ENCODE measurements at regions of chr7 and their contacts with region 1.

Region 1: GRCh38 chr7:149125863-149126661 is at the start of gene ZNF425:
- DNase-seq: peak; percentile 49 to 96
- H3K4me3 ChIP-seq: peak within 1 kb of the TSS; percentile 88 to 92
- H3K27ac ChIP-seq: peak within 1 kb of the TSS; percentile 82 to 96
- H3K4me1 ChIP-seq: peaks cover 6 to 8% of the 10 kb centered on the region in 2 donors
- H3K27me3 ChIP-seq: no peaks in the 10 kb centered on the region
- CTCF ChIP-seq: peak; percentile 96 to 97 (median 97)
- total RNA-seq, gene ZNF425: not detected

Region 2: DNA sequence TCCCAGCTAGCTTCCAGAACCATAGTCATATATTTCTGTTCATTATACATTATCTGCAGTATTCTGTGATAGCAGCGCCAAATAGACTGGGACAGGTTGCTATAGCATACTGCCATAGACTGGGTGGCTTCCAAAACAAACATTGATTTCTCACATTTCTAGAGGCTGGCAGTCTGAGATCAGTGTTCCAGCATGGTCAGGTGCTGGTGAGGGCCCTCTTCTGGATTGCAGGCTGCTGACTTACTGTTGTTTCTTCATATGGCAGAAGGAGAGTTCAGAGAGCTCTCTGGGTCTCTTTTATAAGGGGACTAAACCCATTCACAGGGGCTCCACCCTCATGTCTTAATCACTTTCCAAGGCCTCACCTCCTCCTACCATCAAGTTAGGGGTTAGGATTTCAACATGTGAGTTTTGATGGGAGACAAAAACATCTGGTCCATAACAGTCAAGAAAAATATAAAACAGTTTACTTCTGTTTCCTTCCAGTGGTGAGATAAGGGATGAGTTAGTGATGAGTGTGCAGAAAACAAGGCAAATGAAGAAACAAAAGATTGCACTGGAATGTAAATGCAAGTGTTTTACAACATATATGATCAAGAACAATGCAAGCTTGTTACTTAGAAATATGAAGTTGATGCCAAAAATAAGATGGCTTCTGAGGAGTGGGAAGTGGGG is 934.5 kb before region 1 on chr7:
- intact Hi-C with region 1: no loop called
- DNase-seq: no peak
- H3K4me3 ChIP-seq: no peak overlapping the region
- H3K27ac ChIP-seq: no peak overlapping the region
- H3K4me1 ChIP-seq: no peaks in the 10 kb centered on the region
- H3K27me3 ChIP-seq: no peaks in the 10 kb centered on the region
- CTCF ChIP-seq: no peak

Region 3: GRCh38 chr7:148698397-148699023 is 427.6 kb before region 1 on chr7 and contains the start of gene CUL1:
- intact Hi-C with region 1: loop called (anchors 10 kb)
- DNase-seq: peak; percentile 36 to 92
- H3K4me3 ChIP-seq: peak within 1 kb of the TSS; percentile 97 to 99
- H3K27ac ChIP-seq: peak within 1 kb of the TSS; percentile 99 to 100
- H3K4me1 ChIP-seq: peaks cover 4 to 30% of the 10 kb centered on the region in 2 donors
- H3K27me3 ChIP-seq: no peaks in the 10 kb centered on the region
- CTCF ChIP-seq: no peak
- total RNA-seq, gene CUL1: 16.3 TPM

Region 4: GRCh38 chr7:149067876-149068275 is 58.2 kb before region 1 on chr7:
- intact Hi-C with region 1: loop called (anchors 1 kb)
- DNase-seq: no peak
- H3K4me3 ChIP-seq: no peak overlapping the region
- H3K27ac ChIP-seq: no peak overlapping the region
- H3K4me1 ChIP-seq: no peaks in the 10 kb centered on the region
- H3K27me3 ChIP-seq: no peaks in the 10 kb centered on the region
- CTCF ChIP-seq: no peak

Region 5: GRCh38 chr7:149090397-149091195 is 35.5 kb before region 1 on chr7 and contains the start of gene ZNF786:
- intact Hi-C with region 1: loop called (anchors 2 kb)
- DNase-seq: peak; percentile 29 to 92
- H3K4me3 ChIP-seq: peak within 1 kb of the TSS; percentile 95 to 97
- H3K27ac ChIP-seq: peak within 1 kb of the TSS; percentile 96 to 97
- H3K4me1 ChIP-seq: peaks cover 0 to 7% of the 10 kb centered on the region in 2 donors
- H3K27me3 ChIP-seq: no peaks in the 10 kb centered on the region
- CTCF ChIP-seq: peak; percentile 91 to 97 (median 94)
- total RNA-seq, gene ZNF786: 8.4 TPM

Region 6: GRCh38 chr7:149136118-149136517 is 10.1 kb after region 1 on chr7:
- intact Hi-C with region 1: no loop called
- DNase-seq: peak in 1 of 2 donors; percentile 18
- H3K4me3 ChIP-seq: no peak overlapping the region
- H3K27ac ChIP-seq: no peak overlapping the region
- H3K4me1 ChIP-seq: no peaks in the 10 kb centered on the region
- H3K27me3 ChIP-seq: no peaks in the 10 kb centered on the region
- CTCF ChIP-seq: no peak

Region 7: GRCh38 chr7:149147072-149147751 is 21.1 kb after region 1 on chr7 and contains the start of gene ZNF398:
- intact Hi-C with region 1: loop called (anchors 1 kb)
- DNase-seq: peak in 1 of 2 donors; percentile 85
- H3K4me3 ChIP-seq: peak within 1 kb of the TSS; percentile 90 to 96
- H3K27ac ChIP-seq: peak within 1 kb of the TSS; percentile 80 to 92
- H3K4me1 ChIP-seq: peaks cover 0 to 14% of the 10 kb centered on the region in 2 donors
- H3K27me3 ChIP-seq: no peaks in the 10 kb centered on the region
- CTCF ChIP-seq: peak; percentile 48 to 77 (median 49)
- total RNA-seq, gene ZNF398: 19.6 TPM

Region 8: GRCh38 chr7:149195180-149196150 is 69.4 kb after region 1 on chr7 and contains the start of gene ZNF282:
- intact Hi-C with region 1: loop called (anchors 5 kb)
- DNase-seq: peak; percentile 56 to 96
- H3K4me3 ChIP-seq: peak within 1 kb of the TSS; percentile 79 to 98
- H3K27ac ChIP-seq: peak within 1 kb of the TSS; percentile 80 to 95
- H3K4me1 ChIP-seq: peaks cover 20 to 22% of the 10 kb centered on the region in 2 donors
- H3K27me3 ChIP-seq: no peaks in the 10 kb centered on the region
- CTCF ChIP-seq: peak; percentile 61 to 77 (median 66)
- total RNA-seq, gene ZNF282: 17.9 TPM

Region 9: DNA sequence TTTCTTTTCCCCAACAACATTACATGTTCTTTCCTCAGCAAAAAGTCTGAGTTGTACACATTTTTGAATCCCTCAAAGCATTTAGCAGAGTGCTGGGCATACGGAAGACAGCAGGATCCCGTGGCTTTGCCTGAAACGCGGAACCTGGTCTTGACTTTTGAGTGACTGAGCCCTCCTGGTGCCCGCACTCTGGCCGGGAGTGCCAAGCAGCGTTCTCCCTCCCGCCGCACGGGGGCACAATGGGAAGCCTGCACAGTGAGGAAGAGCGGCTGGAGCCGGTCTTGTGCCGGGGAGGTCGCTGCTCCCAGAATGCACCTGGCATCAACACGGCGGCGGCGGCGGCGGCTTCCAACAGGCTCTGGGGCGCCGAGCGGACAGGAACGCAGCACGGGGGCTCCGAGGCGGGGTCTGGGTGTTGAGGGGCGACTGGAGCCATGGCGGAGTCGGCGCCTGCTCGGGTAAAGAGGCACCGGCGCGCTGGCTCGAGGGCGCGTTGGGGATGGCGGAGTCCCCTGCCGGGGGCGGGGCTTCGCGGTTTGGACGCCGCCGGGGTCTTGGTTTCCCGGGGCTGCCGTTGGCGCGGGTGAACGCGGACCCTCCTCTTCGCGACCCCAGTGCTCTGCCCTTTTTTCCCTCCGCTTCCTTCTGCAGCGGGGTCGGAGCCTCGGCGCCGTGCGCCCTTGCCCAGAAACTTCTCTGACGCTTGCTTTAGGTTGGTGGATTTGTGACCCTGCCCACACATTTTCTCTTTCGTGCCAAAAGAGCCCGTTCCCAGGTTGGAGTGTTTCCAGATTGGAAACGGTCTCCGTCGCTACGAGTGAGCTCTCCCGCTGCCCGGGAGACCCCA is 113.5 kb after region 1 on chr7 and contains the start of gene ZNF212:
- intact Hi-C with region 1: loop called (anchors 1 kb)
- DNase-seq: peak; percentile 62 to 95
- H3K4me3 ChIP-seq: peak within 1 kb of the TSS; percentile 84 to 95
- H3K27ac ChIP-seq: peak within 1 kb of the TSS; percentile 42 to 61
- H3K4me1 ChIP-seq: peaks cover 6 to 12% of the 10 kb centered on the region in 2 donors
- H3K27me3 ChIP-seq: no peaks in the 10 kb centered on the region
- CTCF ChIP-seq: peak; percentile 73 to 89 (median 78)
- total RNA-seq, gene ZNF212: 5.2 TPM

Measured in ascending aorta (tissue), 2 donors.